Sigmoid colon (tissue), 7 donors: ENCODE measurements at regions of chr1 and their contacts with region 1.

Region 1: GRCh38 chr1:151254217-151255213 is at the start of gene PSMD4:
- DNase-seq: peak; percentile 98
- H3K4me3 ChIP-seq: peak within 1 kb of the TSS; percentile 84 to 98 (median 92)
- H3K27ac ChIP-seq: peak within 1 kb of the TSS; percentile 82 to 92 (median 91)
- H3K4me1 ChIP-seq: peaks cover 0 to 26% (median 19%) of the 10 kb centered on the region in 4 donors
- H3K27me3 ChIP-seq: no peaks in the 10 kb centered on the region
- CTCF ChIP-seq: peak in 1 of 4 experiments; percentile 20
- EP300 ChIP-seq: no peak
- POLR2A ChIP-seq: peak; percentile 80 to 90
- total RNA-seq, gene PSMD4: 138 to 194 (median 173) TPM

Region 2: DNA sequence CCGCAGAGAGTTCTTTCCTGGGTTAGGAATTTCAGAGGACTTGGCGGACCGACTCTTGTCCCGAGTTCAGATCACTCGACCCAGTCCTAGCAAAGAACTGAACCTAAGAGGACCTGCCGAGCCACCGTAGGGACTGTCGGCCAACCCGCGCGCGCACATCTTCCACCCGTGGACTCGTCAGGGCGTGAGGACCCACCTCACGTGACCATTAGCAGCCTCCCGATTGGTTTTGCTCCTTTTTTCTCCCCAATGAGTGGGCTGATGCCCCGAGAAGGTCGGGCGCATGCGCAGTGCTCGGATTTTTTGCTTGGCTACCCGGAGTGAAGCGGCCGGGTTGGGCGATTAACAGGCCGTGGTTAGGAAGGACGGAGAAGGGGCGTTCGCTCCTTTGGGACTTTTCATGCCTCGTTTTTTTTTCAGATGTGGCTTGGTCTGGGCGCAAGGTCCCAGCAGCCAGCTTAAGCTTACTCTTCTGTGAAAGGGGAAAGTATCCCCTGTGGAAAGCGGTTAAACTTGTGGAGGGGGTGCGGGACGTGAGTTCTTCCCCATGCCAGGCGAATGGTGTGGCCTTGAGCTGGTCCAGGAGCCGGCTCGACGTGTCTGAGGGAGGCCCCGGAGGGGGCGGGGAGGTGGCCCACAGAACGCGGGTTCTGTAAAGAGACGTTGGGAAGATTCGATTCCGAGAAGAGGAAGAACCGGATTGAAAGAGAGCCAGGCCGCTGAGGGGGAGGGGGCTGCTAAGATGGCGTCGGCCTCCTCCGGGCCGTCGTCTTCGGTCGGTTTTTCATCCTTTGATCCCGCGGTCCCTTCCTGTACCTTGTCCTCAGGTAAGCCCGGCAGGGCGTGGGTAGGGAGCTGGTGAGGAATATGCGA is 56.0 kb before region 1 on chr1 and contains the start of gene PIP5K1A:
- intact Hi-C with region 1: loop called (anchors 1 kb)
- DNase-seq: peak; percentile 100
- H3K4me3 ChIP-seq: peak within 1 kb of the TSS; percentile 62 to 88 (median 70)
- H3K27ac ChIP-seq: peak within 1 kb of the TSS; percentile 90 to 95 (median 93)
- H3K4me1 ChIP-seq: peaks cover 0 to 47% (median 38%) of the 10 kb centered on the region in 4 donors
- H3K27me3 ChIP-seq: no peaks in the 10 kb centered on the region
- CTCF ChIP-seq: no peak
- EP300 ChIP-seq: no peak
- POLR2A ChIP-seq: peak; percentile 84 to 93
- total RNA-seq, gene PIP5K1A: 33.2 to 51.5 (median 37.8) TPM